ENCODE measurements at regions of chr13 and their contacts with region 1.

Region 1: GRCh38 chr13:102845630-102846260 is at the start of gene ERCC5:
- DNase-seq: peak; percentile 96
- ATAC-seq: peak; percentile 94
- total RNA-seq, gene ERCC5: 27.3 TPM

Region 2: GRCh38 chr13:102580552-102581169 is 265.1 kb before region 1 on chr13:
- intact Hi-C with region 1: loop called (anchors 2 kb)
- DNase-seq: no peak
- ATAC-seq: peak; percentile 59

Region 3: GRCh38 chr13:102800145-102801041 is 45.4 kb before region 1 on chr13:
- intact Hi-C with region 1: loop called (anchors 1 kb)
- DNase-seq: peak; percentile 89
- ATAC-seq: peak; percentile 91